AG04449 (cell line): ENCODE measurements at regions of chr3 and their contacts with region 1.

Region 1: GRCh38 chr3:101665851-101666250 is 11.1 kb downstream of the ZBTB11 start:
- DNase-seq: no peak
- H3K4me3 ChIP-seq: no peak overlapping the region
- CTCF ChIP-seq: no peak

Region 2: GRCh38 chr3:101635954-101636798 is 29.7 kb before region 1 on chr3:
- CTCF ChIA-PET with region 1: interaction called, 12 read pairs
- POLR2A ChIA-PET with region 1: no interaction called
- DNase-seq: no peak
- H3K4me3 ChIP-seq: no peak overlapping the region
- CTCF ChIP-seq: peak; percentile 44

Region 3: GRCh38 chr3:101676765-101677435 is 11.0 kb after region 1 on chr3 and contains the start of gene ZBTB11:
- CTCF ChIA-PET with region 1: interaction called, 14 read pairs
- POLR2A ChIA-PET with region 1: no interaction called
- DNase-seq: peak; percentile 98
- H3K4me3 ChIP-seq: peak within 1 kb of the TSS; percentile 99
- CTCF ChIP-seq: peak; percentile 67